Esophagus squamous epithelium (tissue), 5 donors: ENCODE measurements at regions of chr3 and their contacts with region 1.

Region 1: DNA sequence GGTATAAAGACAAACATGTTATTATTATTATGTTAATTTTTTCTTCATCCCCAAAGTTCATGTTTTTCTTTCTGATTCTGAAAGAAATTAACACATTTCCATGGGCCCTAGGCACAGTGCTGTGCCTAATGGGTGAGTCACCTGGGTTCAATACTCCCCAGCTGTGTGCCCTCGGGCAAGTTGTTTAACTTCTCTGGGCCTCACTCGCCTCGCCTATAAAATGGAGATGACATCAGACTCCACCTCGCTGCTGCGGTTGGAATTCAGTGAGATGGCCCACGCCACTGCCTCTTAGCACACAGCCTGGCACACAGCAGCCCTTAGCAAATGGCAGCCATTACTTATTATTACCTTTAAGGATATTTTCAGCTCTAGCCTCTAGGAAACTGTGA is 22.6 kb downstream of the DNASE1L3 start:
- DNase-seq: no peak
- H3K4me3 ChIP-seq: no peak overlapping the region
- H3K27ac ChIP-seq: peak overlapping the region in 2 of 4 donors; percentile 32 to 52
- H3K4me1 ChIP-seq: peaks cover 0 to 24% (median 15%) of the 10 kb centered on the region in 3 donors
- H3K27me3 ChIP-seq: no peaks in the 10 kb centered on the region
- CTCF ChIP-seq: no peak
- POLR2A ChIP-seq: no peak

Region 2: DNA sequence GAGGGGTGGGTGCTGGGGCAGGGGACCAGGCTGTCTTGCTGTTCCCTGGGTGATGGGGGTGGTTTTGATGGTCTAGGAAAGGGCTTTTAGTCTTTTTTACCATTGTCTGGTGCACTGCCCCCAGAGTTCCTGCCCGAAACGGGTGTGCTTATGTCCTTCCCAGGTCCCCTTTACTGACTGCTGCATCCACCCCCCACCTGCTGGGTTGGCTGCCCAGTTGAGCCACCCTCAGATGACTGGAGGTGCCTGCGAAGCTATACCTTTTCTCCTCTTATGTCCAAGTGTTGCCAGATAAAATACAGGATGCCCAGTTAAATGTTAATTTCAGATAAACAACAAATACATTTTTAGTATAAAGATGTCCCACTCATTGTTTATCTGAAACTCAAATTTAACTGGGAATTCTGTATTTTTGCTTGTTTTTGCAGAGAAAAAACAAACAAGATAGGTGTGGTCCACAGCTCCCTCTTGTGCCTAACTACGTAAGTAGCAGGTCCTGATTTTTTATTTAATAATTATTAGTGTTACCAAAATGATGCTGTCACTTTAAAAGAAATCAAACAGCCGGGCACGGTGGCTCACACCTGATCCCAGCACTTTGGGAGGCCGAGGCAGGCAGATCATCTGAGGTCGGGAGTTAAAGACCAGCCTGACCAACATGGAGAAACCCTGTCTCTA is 111.8 kb after region 1 on chr3:
- intact Hi-C with region 1: loop called (anchors 5 kb)
- DNase-seq: no peak
- H3K4me3 ChIP-seq: no peak overlapping the region
- H3K27ac ChIP-seq: no peak overlapping the region
- H3K4me1 ChIP-seq: peaks cover 0 to 17% (median 0%) of the 10 kb centered on the region in 3 donors
- H3K27me3 ChIP-seq: peaks cover 0 to 5% (median 0%) of the 10 kb centered on the region in 4 donors
- CTCF ChIP-seq: peak; percentile 41 to 70 (median 58)
- POLR2A ChIP-seq: no peak